Posterior cingulate gyrus (tissue), 11 donors: ENCODE measurements at regions of chr1 and their contacts with region 1.

Region 1: GRCh38 chr1:201114236-201115131 is 2.3 kb upstream of the CACNA1S start:
- DNase-seq: peak; percentile 82 to 98 (median 91)

Region 2: DNA sequence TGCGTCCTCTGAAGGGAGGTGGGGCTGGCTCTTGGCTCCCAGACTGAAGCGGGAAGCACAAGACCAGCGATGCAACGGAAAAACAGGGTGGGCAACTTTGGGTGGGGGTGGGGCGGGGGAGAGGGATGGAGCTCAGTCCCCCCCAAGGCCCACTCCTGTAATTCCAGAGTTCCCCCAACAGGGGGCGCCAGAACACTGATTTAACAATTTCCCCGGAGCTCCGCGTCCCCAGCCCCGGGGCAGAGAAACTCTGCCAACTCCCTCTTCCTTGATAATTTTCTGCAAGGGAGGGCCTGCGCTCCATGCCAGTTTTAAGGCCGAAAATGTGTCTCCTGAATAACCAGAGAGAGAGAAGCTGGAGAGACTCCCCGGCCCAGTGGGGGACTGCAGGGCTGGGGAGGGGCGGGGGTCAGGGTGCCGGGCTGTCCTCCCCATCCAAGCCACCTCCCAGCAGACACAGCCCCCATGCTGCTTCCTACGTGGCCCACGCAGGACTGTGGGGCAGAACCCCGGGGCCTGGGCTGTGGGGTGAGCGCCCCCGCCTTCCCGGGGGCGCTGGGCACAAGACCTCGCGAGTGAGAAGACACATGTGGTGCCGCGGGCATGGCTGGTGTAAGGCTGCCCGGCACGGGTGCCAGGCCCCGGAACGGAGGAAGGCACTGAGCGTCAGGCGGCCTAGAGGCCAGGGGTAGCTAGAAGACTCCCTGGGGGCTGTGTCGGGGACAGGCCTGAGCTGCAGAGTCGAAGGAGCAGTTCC is 142.4 kb before region 1 on chr1:
- intact Hi-C with region 1: loop called (anchors 5 kb)
- DNase-seq: peak; percentile 65 to 96 (median 78)